Activated CD8-positive, alpha-beta T cell treated with anti-CD3 and anti-CD28 coated beads for 36 hours (primary cell): ENCODE measurements at regions of chr14 and their contacts with region 1.

Region 1: GRCh38 chr14:73886449-73887317 is at the start of gene ZNF410:
- DNase-seq: peak; percentile 97
- ATAC-seq: peak; percentile 100
- H3K4me3 Mint-ChIP-seq: peak within 1 kb of the TSS; percentile 95
- H3K27ac Mint-ChIP-seq: peak within 1 kb of the TSS; percentile 99
- H3K4me1 Mint-ChIP-seq: peaks cover 43% of the 10 kb centered on the region
- H3K27me3 Mint-ChIP-seq: no peaks in the 10 kb centered on the region
- CTCF ChIP-seq: no peak
- total RNA-seq, gene ZNF410: 54.9 to 56.1 TPM

Region 2: DNA sequence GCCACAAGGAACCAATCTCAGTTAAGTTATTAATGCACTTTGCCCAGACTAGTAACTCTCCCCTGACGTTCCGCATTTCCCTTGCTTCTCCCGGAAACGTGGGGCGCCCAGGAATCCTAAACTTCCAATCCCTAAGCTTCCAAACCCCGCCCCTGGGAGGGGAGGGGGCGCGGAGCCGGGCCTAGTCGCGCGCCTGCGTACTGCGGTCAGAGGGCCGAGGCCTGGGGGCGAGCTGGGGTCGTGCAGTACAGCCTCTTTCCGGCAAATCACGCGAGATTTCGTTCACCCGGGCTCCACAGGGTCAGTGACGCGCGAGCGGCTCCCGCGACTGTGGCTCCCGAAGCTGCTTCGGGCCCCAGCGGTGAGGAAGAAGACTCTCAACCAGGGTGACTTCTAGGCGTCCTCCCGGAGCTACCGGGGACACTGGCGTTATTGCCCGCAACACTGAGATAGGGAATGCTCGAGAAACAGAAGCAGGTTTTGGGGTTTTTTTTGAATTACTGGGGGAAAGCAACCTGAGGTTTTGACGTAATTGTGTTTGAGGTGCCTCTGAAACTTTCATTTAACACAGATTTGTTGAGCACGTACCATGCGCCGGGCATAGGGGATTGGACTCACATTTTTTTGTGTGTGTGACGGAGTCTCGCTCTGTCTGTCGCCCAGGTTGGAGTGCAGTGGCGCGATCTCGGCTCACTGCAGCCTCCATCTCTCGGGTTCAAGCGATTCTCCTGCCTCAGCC is 34.9 kb before region 1 on chr14 and contains the start of gene PTGR2:
- CTCF ChIA-PET with region 1: interaction called, 3 read pairs
- POLR2A ChIA-PET with region 1: interaction called, 19 read pairs
- intact Hi-C with region 1: no loop called
- DNase-seq: peak; percentile 94
- ATAC-seq: peak; percentile 98
- H3K4me3 Mint-ChIP-seq: peak within 1 kb of the TSS; percentile 87
- H3K27ac Mint-ChIP-seq: peak within 1 kb of the TSS; percentile 99
- H3K4me1 Mint-ChIP-seq: peaks cover 15% of the 10 kb centered on the region
- H3K27me3 Mint-ChIP-seq: no peaks in the 10 kb centered on the region
- CTCF ChIP-seq: no peak
- total RNA-seq, gene PTGR2: 10.6 to 11.0 TPM

Region 3: GRCh38 chr14:74065746-74066575 is 179.3 kb after region 1 on chr14:
- CTCF ChIA-PET with region 1: no interaction called
- POLR2A ChIA-PET with region 1: no interaction called
- intact Hi-C with region 1: no loop called
- DNase-seq: no peak
- ATAC-seq: no peak
- H3K4me3 Mint-ChIP-seq: no peak overlapping the region
- H3K27ac Mint-ChIP-seq: no peak overlapping the region
- H3K4me1 Mint-ChIP-seq: no peaks in the 10 kb centered on the region
- H3K27me3 Mint-ChIP-seq: no peaks in the 10 kb centered on the region
- CTCF ChIP-seq: no peak